CD8-positive, alpha-beta T cell (primary cell): ENCODE measurements at regions of chr10 and their contacts with region 1.

Region 1: DNA sequence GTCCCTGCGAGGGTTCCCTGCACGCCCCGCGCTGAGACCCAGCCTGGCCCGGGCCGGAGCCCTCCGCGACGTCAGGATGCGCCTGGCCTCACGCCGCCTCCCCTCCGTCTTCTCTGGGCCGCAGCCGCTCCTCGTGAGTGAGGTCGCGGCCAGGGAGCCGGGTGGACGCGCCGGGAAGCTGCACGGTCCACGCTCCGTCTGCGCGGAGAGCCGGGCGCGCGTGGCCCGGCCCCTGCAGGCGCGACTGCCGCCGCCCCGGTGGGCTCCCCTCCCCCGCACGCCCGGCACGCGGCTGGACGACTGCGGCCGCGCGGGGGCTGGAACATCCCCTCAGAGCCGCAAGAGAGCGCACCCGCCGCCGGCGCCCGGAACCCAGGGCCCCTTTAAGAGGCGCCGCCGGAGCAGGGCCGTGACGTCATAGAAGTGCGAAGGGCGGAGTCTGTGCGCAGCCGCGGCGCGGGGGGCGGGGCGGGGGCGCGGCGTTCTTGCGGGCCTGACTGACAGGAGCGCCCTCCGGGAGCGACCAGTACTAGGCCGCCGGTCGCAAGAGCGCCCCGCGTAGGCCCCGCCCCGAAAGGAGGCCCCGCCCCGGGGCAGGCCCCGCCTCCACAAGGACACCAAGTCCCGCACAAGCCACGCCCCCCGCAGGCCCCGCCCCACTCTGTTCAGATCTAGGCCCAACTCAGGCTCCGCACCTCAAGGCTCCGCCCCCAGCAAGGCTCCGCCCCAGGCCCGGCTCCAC is 445 bp upstream of the INPP5A start:
- DNase-seq: peak; percentile 99 to 100 (median 100)
- ATAC-seq: peak; percentile 89
- H3K4me3 ChIP-seq: peak overlapping the region; percentile 23 to 65
- H3K4me3 Mint-ChIP-seq: peak overlapping the region; percentile 79
- H3K27ac ChIP-seq: peak overlapping the region; percentile 39 to 56
- H3K27ac Mint-ChIP-seq: peak overlapping the region; percentile 75
- H3K4me1 ChIP-seq: peaks cover 49% of the 10 kb centered on the region
- H3K4me1 Mint-ChIP-seq: peaks cover 49% of the 10 kb centered on the region
- H3K27me3 ChIP-seq: peaks cover 0 to 2% of the 10 kb centered on the region in 2 experiments
- H3K27me3 Mint-ChIP-seq: no peaks in the 10 kb centered on the region
- CTCF ChIP-seq: peak; percentile 27

Region 2: GRCh38 chr10:131900350-131901146 is 636.6 kb before region 1 on chr10 and contains the start of gene PPP2R2D:
- CTCF ChIA-PET with region 1: no interaction called
- POLR2A ChIA-PET with region 1: no interaction called
- intact Hi-C with region 1: loop called (anchors 2 to 5 kb)
- DNase-seq: peak; percentile 91 to 97 (median 95)
- ATAC-seq: peak; percentile 83
- H3K4me3 ChIP-seq: peak within 1 kb of the TSS; percentile 65 to 76
- H3K4me3 Mint-ChIP-seq: peak within 1 kb of the TSS; percentile 87
- H3K27ac ChIP-seq: peak within 1 kb of the TSS; percentile 73 to 79
- H3K27ac Mint-ChIP-seq: peak within 1 kb of the TSS; percentile 88
- H3K4me1 ChIP-seq: peaks cover 56% of the 10 kb centered on the region
- H3K4me1 Mint-ChIP-seq: peaks cover 52% of the 10 kb centered on the region
- H3K27me3 ChIP-seq: no peaks in the 10 kb centered on the region
- H3K27me3 Mint-ChIP-seq: no peaks in the 10 kb centered on the region
- CTCF ChIP-seq: no peak
- total RNA-seq, gene PPP2R2D: 28.4 to 28.5 TPM

Region 3: DNA sequence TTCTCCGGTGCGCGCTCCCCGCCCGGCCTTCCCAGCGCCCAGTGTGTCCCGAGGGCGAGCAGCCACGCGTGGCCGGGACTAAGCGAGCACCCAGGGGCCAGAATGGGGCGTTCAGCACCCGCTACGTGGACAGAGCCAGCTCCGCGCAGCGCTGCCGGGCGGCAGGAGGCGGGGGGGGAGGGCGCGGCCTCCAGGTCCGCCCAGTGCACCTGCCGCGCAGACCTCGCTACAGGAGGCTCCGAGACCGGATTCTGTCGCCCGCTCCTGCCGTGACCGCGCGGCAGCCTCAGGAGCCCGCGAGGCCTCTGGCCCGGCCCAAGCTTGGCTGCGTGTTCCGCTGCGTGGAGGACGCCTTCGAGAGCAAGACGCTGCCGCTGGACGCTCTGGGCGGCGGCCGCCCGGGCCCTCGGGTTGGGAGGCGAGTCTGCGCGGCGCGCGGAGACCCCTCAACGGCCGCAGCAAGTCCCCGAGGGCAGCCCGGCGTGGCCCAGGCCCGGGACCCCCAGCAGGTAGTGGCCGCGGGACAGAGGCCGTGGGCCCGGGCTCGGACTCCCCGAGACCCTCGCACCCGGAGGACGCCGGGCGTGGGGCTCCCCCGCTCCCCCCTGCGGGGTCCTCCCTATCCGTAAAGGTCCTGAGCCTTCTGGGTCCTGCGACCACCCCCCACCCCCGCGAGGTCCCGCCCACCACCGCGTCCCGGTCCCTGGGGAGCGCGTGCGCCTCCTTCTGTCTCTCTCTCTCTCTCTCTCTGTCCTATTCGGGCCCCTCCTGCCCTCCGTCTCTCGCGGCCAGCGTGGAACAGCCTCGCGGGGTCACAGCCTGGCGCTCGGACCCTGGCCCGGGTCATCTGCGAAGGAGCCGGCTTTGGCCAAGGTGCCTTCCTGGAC is 351.3 kb before region 1 on chr10:
- CTCF ChIA-PET with region 1: no interaction called
- POLR2A ChIA-PET with region 1: no interaction called
- intact Hi-C with region 1: loop called in 1 of 2 experiments (anchors 10 kb)
- DNase-seq: peak; percentile 28 to 81 (median 59)
- ATAC-seq: peak; percentile 92
- H3K4me3 ChIP-seq: peak overlapping the region; percentile 32 to 39
- H3K4me3 Mint-ChIP-seq: no peak overlapping the region
- H3K27ac ChIP-seq: no peak overlapping the region
- H3K27ac Mint-ChIP-seq: no peak overlapping the region
- H3K4me1 ChIP-seq: peaks cover 17% of the 10 kb centered on the region
- H3K4me1 Mint-ChIP-seq: peaks cover 7% of the 10 kb centered on the region
- H3K27me3 ChIP-seq: peaks cover 10 to 11% of the 10 kb centered on the region in 2 experiments
- H3K27me3 Mint-ChIP-seq: peaks cover 56% of the 10 kb centered on the region
- CTCF ChIP-seq: no peak

Region 4: GRCh38 chr10:132387764-132388210 is 149.4 kb before region 1 on chr10:
- CTCF ChIA-PET with region 1: no interaction called
- POLR2A ChIA-PET with region 1: no interaction called
- intact Hi-C with region 1: loop called in 1 of 2 experiments (anchors 2 kb)
- DNase-seq: peak; percentile 66 to 89 (median 81)
- ATAC-seq: peak; percentile 94
- H3K4me3 ChIP-seq: peak overlapping the region in 1 of 2 experiments; percentile 18
- H3K4me3 Mint-ChIP-seq: peak overlapping the region; percentile 71
- H3K27ac ChIP-seq: no peak overlapping the region
- H3K27ac Mint-ChIP-seq: peak overlapping the region; percentile 64
- H3K4me1 ChIP-seq: peaks cover 5% of the 10 kb centered on the region
- H3K4me1 Mint-ChIP-seq: peaks cover 3% of the 10 kb centered on the region
- H3K27me3 ChIP-seq: no peaks in the 10 kb centered on the region
- H3K27me3 Mint-ChIP-seq: no peaks in the 10 kb centered on the region
- CTCF ChIP-seq: peak; percentile 44

Region 5: DNA sequence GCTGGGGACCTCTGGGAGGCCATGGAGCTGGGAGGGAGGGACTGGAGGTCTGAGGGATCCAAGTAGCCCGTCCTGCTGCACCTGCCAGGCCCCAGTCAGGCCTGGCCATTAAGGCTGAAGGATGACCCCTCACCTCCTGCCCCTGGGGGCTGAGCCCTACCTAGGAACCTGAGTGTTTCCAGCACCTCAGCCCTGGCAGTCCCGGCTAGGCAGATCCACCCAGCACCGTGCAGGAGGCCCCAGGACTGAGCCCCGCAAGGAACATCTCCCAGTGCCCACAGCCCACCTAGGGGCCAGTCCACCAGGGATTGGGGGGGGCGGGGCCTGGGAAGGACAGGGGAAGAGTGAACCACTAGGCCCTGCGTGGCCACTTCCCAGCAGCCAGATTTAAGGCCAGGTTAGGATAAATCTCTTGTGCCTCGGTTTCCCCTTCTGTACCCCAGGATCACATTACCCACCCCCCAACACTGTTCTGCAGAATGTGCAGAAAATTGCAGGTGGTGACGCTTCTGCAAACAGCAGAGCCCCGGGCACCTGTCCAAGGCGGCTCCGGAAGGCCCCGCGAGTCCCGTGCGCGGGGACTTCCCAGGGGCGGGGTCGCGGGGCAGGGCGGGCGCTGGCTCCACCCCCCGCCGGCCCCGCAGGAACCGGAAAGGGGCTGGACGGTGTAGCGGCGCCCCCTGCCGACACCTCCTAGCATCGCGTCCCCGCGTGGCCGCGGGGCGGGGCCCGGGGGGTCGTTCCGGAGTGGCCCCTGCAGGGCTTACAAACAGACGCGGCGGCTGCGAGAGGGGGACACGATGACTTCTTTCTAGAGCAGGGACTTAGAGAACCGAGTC is 84.3 kb before region 1 on chr10:
- CTCF ChIA-PET with region 1: interaction called, 5 read pairs
- POLR2A ChIA-PET with region 1: no interaction called
- intact Hi-C with region 1: loop called (anchors 1 kb)
- DNase-seq: peak; percentile 86 to 96 (median 94)
- ATAC-seq: peak; percentile 92
- H3K4me3 ChIP-seq: peak overlapping the region in 1 of 2 experiments; percentile 20
- H3K4me3 Mint-ChIP-seq: peak overlapping the region; percentile 42
- H3K27ac ChIP-seq: peak overlapping the region; percentile 65 to 79
- H3K27ac Mint-ChIP-seq: peak overlapping the region; percentile 89
- H3K4me1 ChIP-seq: peaks cover 35% of the 10 kb centered on the region
- H3K4me1 Mint-ChIP-seq: peaks cover 29% of the 10 kb centered on the region
- H3K27me3 ChIP-seq: no peaks in the 10 kb centered on the region
- H3K27me3 Mint-ChIP-seq: no peaks in the 10 kb centered on the region
- CTCF ChIP-seq: peak; percentile 88

Region 6: DNA sequence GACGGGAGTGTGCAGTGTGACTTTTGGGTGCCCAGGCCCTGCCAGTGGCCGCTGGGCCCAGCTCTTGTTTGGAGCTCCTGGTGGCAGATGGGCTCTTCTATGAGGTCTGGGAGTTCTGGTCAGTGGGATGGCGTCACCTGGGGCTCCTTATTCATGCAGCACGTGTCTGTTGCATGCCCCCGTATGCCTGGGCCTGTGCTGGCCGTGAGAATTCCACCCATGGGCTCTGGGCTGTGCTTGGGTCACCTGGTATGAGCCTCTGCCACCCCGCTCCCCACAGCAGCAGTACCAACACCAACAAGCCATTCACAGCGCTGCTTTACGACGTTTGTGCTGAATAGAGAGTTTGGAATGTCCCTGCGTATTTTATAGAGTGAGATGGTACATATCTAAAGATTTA is 27.5 kb after region 1 on chr10:
- CTCF ChIA-PET with region 1: no interaction called
- POLR2A ChIA-PET with region 1: no interaction called
- intact Hi-C with region 1: no loop called
- DNase-seq: no peak
- ATAC-seq: no peak
- H3K4me3 ChIP-seq: no peak overlapping the region
- H3K4me3 Mint-ChIP-seq: no peak overlapping the region
- H3K27ac ChIP-seq: no peak overlapping the region
- H3K27ac Mint-ChIP-seq: no peak overlapping the region
- H3K4me1 ChIP-seq: peaks cover 8% of the 10 kb centered on the region
- H3K4me1 Mint-ChIP-seq: peaks cover 32% of the 10 kb centered on the region
- H3K27me3 ChIP-seq: no peaks in the 10 kb centered on the region
- H3K27me3 Mint-ChIP-seq: no peaks in the 10 kb centered on the region
- CTCF ChIP-seq: no peak

Region 7: DNA sequence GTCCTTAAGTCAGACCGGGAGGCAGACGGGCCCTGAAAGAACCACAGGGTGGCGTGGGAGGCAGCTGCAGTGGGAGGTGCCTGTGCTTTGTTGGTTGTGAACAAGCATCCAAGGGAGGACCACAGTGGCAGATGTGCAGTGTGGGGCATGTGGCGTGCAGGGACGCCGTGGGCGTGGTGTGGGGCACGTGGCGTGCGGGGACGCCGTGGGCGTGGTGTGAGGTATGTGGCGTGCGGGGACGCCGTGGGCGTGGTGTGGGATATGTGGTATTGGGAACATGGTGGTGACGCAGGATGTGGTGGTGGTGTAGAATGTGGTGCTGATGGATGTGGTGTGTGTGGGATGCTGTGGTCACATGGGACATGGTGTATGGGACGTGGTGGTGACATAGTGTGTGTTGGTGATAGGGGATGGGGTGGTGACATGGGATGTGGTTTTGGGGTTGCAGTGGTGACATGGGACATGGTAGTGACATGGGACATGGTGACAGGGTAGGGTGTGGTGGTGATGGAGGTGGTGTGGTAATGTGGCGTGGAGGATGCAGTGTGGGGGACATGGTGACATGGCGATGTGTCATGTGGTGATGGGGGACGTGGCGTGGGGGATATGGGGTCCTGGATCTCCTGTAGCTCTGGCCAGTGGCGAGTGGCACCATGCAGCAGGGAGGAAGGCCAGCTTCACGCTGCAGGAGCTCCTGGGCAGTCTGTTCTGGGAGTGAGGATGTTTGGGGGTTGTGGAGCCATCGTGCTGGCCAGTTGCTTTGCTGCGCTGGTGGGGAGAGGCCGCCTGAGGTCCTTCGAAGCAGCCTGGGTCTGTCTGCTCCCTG is 79.2 kb after region 1 on chr10:
- CTCF ChIA-PET with region 1: no interaction called
- POLR2A ChIA-PET with region 1: no interaction called
- intact Hi-C with region 1: loop called in 1 of 2 experiments (anchors 5 kb)
- DNase-seq: peak; percentile 30 to 87 (median 56)
- ATAC-seq: peak; percentile 86
- H3K4me3 ChIP-seq: no peak overlapping the region
- H3K4me3 Mint-ChIP-seq: peak overlapping the region; percentile 42
- H3K27ac ChIP-seq: peak overlapping the region; percentile 27 to 61
- H3K27ac Mint-ChIP-seq: peak overlapping the region; percentile 91
- H3K4me1 ChIP-seq: peaks cover 17% of the 10 kb centered on the region
- H3K4me1 Mint-ChIP-seq: peaks cover 28% of the 10 kb centered on the region
- H3K27me3 ChIP-seq: no peaks in the 10 kb centered on the region
- H3K27me3 Mint-ChIP-seq: no peaks in the 10 kb centered on the region
- CTCF ChIP-seq: no peak

Region 8: DNA sequence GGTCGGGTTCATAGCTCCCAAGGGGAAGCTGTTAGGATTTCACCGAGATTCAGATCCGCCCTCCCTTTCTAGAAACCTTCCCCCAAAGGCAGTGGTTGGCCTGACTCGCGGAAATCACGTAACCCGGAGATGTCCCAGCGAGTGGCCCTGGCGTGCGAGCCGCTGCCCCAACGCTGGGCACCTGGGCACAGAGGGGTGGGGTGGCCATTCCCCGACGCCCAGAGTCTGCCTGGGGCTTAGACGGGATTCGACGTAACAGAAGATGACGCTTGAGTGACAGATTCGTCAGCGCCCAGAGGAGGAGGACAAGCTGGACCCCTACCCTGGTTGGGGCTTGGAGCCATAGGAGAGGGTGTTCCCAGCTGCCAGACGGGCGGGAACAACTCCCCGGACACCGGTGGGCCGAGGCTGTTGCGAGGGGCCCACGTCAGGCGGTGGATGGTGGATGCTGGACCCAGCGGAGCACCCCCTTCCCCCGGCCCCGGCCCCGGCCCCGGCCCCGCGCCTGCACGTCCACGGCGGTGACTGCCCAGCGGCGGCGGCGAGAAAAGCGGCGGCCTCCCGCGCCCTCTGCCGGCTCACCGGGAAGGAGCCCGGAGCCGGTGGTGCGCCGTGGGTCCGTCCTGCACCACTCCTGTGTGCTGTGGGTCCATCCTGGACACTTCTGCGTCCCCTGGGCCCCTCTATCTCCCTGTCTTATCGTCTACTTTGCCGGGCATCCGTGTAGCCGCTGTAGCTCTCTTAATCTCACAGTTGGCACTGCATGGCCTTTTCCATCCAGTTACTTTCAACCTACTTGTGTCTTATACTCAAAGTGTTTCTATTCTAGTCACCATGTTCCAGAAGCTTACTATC is 587.4 kb after region 1 on chr10:
- CTCF ChIA-PET with region 1: no interaction called
- POLR2A ChIA-PET with region 1: no interaction called
- intact Hi-C with region 1: no loop called
- DNase-seq: no peak
- ATAC-seq: no peak
- H3K4me3 ChIP-seq: no peak overlapping the region
- H3K4me3 Mint-ChIP-seq: no peak overlapping the region
- H3K27ac ChIP-seq: no peak overlapping the region
- H3K27ac Mint-ChIP-seq: no peak overlapping the region
- H3K4me1 ChIP-seq: no peaks in the 10 kb centered on the region
- H3K4me1 Mint-ChIP-seq: peaks cover 5% of the 10 kb centered on the region
- H3K27me3 ChIP-seq: peaks cover 0 to 2% of the 10 kb centered on the region in 2 experiments
- H3K27me3 Mint-ChIP-seq: peaks cover 12% of the 10 kb centered on the region
- CTCF ChIP-seq: no peak

Region 9: DNA sequence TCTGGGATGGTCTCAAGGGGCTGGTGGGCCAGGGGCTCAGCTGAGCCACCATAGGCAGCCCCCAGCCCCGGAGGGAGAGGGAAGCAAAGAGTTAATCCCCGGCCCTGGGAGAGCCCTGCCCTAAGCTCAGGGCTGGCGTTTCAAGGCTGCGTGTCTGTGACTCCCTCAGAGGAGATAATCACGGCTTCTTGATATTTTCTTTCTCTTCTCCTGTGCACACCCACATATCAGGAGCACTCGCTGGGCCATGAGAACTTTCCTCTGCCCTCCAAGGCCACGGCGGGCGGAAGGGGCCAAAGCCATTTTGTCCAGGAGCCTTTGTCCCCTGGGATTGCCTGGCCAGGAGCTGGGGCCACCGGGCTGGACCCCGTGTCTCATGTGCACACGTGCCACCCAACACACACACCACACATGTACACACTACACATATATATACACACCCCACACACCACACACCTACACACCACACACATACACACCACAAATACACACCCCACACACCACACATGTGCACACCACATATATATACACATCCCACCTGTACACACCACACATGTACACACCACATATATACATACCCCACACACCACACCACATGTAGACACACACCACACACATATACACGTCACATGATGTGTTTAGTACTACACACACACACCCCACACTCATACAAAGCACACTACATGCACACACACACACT is 717.4 kb after region 1 on chr10:
- CTCF ChIA-PET with region 1: no interaction called
- POLR2A ChIA-PET with region 1: no interaction called
- intact Hi-C with region 1: no loop called
- DNase-seq: no peak
- ATAC-seq: no peak
- H3K4me3 ChIP-seq: no peak overlapping the region
- H3K4me3 Mint-ChIP-seq: no peak overlapping the region
- H3K27ac ChIP-seq: no peak overlapping the region
- H3K27ac Mint-ChIP-seq: no peak overlapping the region
- H3K4me1 ChIP-seq: peaks cover 28% of the 10 kb centered on the region
- H3K4me1 Mint-ChIP-seq: peaks cover 21% of the 10 kb centered on the region
- H3K27me3 ChIP-seq: no peaks in the 10 kb centered on the region
- H3K27me3 Mint-ChIP-seq: peaks cover 6% of the 10 kb centered on the region
- CTCF ChIP-seq: no peak

Region 10: DNA sequence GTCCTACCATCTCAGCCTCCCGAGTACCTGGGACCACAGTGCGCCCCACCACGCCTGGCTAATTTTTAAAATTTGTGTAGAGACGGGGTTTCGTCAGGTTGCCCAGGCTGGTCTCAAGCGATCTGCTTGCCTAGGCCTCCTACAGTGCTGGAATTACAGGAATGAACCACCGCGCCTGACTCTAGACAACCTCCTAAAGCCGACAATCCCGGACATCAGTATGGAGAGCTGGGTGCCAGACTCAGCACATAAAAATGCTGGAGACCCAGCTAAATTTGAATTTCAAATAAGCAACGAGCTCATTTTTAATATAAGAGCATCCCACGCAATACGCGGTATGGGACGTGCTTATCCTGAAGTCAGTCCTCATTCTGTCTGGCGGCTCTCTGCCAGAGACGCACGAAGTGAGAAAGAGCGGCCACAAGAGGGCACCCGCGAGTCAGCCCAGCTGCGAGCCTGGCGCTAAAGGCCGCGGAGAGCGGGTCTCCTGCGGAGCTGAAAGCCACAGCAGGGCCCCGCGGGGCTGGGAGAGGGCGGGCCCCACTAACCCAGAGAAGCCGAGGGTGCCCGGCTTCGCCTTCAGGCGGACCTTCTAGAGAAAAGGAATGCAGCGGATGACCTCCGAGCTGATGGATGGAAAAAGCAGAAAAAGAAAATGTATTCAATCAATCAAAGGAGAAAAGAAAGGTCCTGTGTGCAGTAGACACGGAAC is 792.5 kb after region 1 on chr10:
- CTCF ChIA-PET with region 1: no interaction called
- POLR2A ChIA-PET with region 1: no interaction called
- intact Hi-C with region 1: no loop called
- DNase-seq: peak; percentile 75 to 94 (median 89)
- ATAC-seq: peak; percentile 81
- H3K4me3 ChIP-seq: peak overlapping the region; percentile 4 to 6
- H3K4me3 Mint-ChIP-seq: no peak overlapping the region
- H3K27ac ChIP-seq: no peak overlapping the region
- H3K27ac Mint-ChIP-seq: no peak overlapping the region
- H3K4me1 ChIP-seq: peaks cover 13% of the 10 kb centered on the region
- H3K4me1 Mint-ChIP-seq: peaks cover 9% of the 10 kb centered on the region
- H3K27me3 ChIP-seq: peaks cover 23 to 33% of the 10 kb centered on the region in 2 experiments
- H3K27me3 Mint-ChIP-seq: peaks cover 28% of the 10 kb centered on the region
- CTCF ChIP-seq: peak; percentile 96

Region 11: GRCh38 chr10:133373104-133373624 is 836.0 kb after region 1 on chr10 and contains the start of gene ECHS1:
- CTCF ChIA-PET with region 1: no interaction called
- POLR2A ChIA-PET with region 1: no interaction called
- intact Hi-C with region 1: loop called in 1 of 2 experiments (anchors 10 kb)
- DNase-seq: peak; percentile 81 to 95 (median 92)
- ATAC-seq: peak; percentile 99
- H3K4me3 ChIP-seq: peak within 1 kb of the TSS; percentile 56 to 73
- H3K4me3 Mint-ChIP-seq: peak within 1 kb of the TSS; percentile 78
- H3K27ac ChIP-seq: peak within 1 kb of the TSS in 1 of 2 experiments; percentile 48
- H3K27ac Mint-ChIP-seq: peak within 1 kb of the TSS; percentile 32
- H3K4me1 ChIP-seq: peaks cover 10% of the 10 kb centered on the region
- H3K4me1 Mint-ChIP-seq: peaks cover 6% of the 10 kb centered on the region
- H3K27me3 ChIP-seq: no peaks in the 10 kb centered on the region
- H3K27me3 Mint-ChIP-seq: no peaks in the 10 kb centered on the region
- CTCF ChIP-seq: no peak
- total RNA-seq, gene ECHS1: 7.9 to 8.5 TPM